ENCODE measurements at regions of chr1 and their contacts with region 1.

Region 1: GRCh38 chr1:225923692-225924555 is at the start of gene PYCR2:
- DNase-seq: peak; percentile 99 to 100 (median 99)
- ATAC-seq: peak; percentile 91
- H3K4me3 ChIP-seq: peak within 1 kb of the TSS; percentile 94
- H3K27ac ChIP-seq: peak within 1 kb of the TSS; percentile 93
- H3K4me1 ChIP-seq: peaks cover 44 to 69% of the 10 kb centered on the region in 2 experiments
- H3K27me3 ChIP-seq: no peaks in the 10 kb centered on the region
- CTCF ChIP-seq: peak; percentile 5 to 19 (median 10); a peak in 2 of 6 replicates
- EP300 ChIP-seq: peak; percentile 41
- POLR2A ChIP-seq: peak; percentile 97
- RAD21 ChIP-seq: peak in 1 of 2 experiments; percentile 16; a peak in 2 of 4 replicates
- polyA plus RNA-seq, gene PYCR2: 5.5 to 7.9 TPM

Region 2: DNA sequence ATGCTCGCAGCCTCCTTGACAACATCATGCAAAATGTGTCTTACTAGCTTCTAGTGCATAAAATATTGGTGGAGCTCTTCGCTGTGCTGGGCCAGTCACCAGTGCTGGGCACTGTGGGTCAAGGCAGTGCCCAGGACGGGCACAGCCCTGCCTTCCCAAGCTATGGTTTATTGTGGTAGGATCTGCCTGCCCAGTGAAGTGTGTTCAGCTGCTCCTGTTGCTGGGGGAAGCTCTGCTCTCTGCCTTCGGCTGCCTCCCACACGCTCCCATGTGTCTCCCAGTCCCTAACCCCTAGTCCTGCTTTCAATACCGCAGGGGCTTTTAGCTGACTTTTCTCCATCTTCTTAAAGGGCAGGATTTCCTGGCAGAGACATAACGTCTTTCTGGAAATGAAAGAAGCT is 98.3 kb before region 1 on chr1:
- CTCF ChIA-PET with region 1: no interaction called
- POLR2A ChIA-PET with region 1: no interaction called
- in situ Hi-C with region 1: no loop called
- intact Hi-C with region 1: no loop called
- DNase-seq: no peak
- ATAC-seq: peak; percentile 12; the same call in 2 of the 3 replicates
- H3K4me3 ChIP-seq: no peak overlapping the region
- H3K27ac ChIP-seq: no peak overlapping the region
- H3K4me1 ChIP-seq: peaks cover 24 to 40% of the 10 kb centered on the region in 2 experiments; a peak in 4 of 5 replicates
- H3K27me3 ChIP-seq: no peaks in the 10 kb centered on the region
- CTCF ChIP-seq: no peak
- EP300 ChIP-seq: no peak
- POLR2A ChIP-seq: no peak
- RAD21 ChIP-seq: no peak

Region 3: GRCh38 chr1:225866061-225866837 is 57.7 kb before region 1 on chr1:
- CTCF ChIA-PET with region 1: no interaction called
- POLR2A ChIA-PET with region 1: no interaction called
- in situ Hi-C with region 1: no loop called
- intact Hi-C with region 1: no loop called
- DNase-seq: no peak
- ATAC-seq: peak; percentile 16; the same call in 2 of the 3 replicates
- H3K4me3 ChIP-seq: no peak overlapping the region
- H3K27ac ChIP-seq: no peak overlapping the region
- H3K4me1 ChIP-seq: no peaks in the 10 kb centered on the region
- H3K27me3 ChIP-seq: no peaks in the 10 kb centered on the region
- CTCF ChIP-seq: no peak
- EP300 ChIP-seq: no peak
- POLR2A ChIP-seq: no peak
- RAD21 ChIP-seq: no peak

Region 4: GRCh38 chr1:225896937-225897549 is 26.9 kb before region 1 on chr1:
- CTCF ChIA-PET with region 1: no interaction called
- POLR2A ChIA-PET with region 1: interaction called, 10 read pairs
- in situ Hi-C with region 1: no loop called
- intact Hi-C with region 1: no loop called
- DNase-seq: peak in 3 of 4 experiments; percentile 38 to 57 (median 44)
- ATAC-seq: peak; percentile 74
- H3K4me3 ChIP-seq: no peak overlapping the region
- H3K27ac ChIP-seq: peak overlapping the region; percentile 12; the same call in 1 of the 3 replicates
- H3K4me1 ChIP-seq: peaks cover 15 to 20% of the 10 kb centered on the region in 2 experiments
- H3K27me3 ChIP-seq: no peaks in the 10 kb centered on the region
- CTCF ChIP-seq: no peak
- EP300 ChIP-seq: no peak
- POLR2A ChIP-seq: no peak
- RAD21 ChIP-seq: no peak

Region 5: DNA sequence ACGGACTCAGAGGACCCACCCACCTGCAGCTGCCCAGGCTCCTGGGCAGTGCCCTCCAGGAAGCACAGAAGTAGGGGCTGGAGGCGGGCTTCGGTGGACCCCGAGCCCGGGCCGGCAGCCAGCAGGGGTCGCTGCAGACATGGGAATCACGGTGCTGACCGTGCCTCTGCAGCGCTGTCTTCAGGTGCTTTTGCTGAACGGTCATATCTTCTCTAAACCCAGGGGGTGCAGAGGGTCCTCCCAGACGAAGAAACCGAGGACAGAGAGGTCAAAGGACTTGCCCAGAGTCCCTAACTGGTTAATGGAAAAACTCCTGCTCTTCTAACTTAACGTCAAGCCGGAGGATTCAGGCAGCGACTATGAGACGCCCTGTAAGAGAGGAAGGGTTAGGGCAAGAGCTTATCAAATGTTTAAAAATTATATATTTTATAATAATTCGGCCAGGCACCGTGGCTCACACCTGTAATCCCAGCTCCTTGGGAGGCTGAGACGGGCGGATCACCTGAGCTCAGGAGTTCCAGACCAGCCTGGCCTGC is 38.6 kb after region 1 on chr1:
- CTCF ChIA-PET with region 1: no interaction called
- POLR2A ChIA-PET with region 1: interaction called, 3 read pairs
- in situ Hi-C with region 1: no loop called
- intact Hi-C with region 1: loop called (anchors 2 kb)
- DNase-seq: peak; percentile 89 to 91 (median 90)
- ATAC-seq: peak; percentile 99
- H3K4me3 ChIP-seq: peak overlapping the region; percentile 15
- H3K27ac ChIP-seq: no peak overlapping the region; the same call in 2 of the 3 replicates
- H3K4me1 ChIP-seq: peaks cover 0 to 12% of the 10 kb centered on the region in 2 experiments; a peak in 4 of 5 replicates
- H3K27me3 ChIP-seq: no peaks in the 10 kb centered on the region
- CTCF ChIP-seq: peak; percentile 99
- EP300 ChIP-seq: no peak
- POLR2A ChIP-seq: no peak
- RAD21 ChIP-seq: peak; percentile 87 to 97

Measured in K562 (cell line).